B cell (primary cell): ENCODE measurements at regions of chr7 and their contacts with region 1.

Region 1: DNA sequence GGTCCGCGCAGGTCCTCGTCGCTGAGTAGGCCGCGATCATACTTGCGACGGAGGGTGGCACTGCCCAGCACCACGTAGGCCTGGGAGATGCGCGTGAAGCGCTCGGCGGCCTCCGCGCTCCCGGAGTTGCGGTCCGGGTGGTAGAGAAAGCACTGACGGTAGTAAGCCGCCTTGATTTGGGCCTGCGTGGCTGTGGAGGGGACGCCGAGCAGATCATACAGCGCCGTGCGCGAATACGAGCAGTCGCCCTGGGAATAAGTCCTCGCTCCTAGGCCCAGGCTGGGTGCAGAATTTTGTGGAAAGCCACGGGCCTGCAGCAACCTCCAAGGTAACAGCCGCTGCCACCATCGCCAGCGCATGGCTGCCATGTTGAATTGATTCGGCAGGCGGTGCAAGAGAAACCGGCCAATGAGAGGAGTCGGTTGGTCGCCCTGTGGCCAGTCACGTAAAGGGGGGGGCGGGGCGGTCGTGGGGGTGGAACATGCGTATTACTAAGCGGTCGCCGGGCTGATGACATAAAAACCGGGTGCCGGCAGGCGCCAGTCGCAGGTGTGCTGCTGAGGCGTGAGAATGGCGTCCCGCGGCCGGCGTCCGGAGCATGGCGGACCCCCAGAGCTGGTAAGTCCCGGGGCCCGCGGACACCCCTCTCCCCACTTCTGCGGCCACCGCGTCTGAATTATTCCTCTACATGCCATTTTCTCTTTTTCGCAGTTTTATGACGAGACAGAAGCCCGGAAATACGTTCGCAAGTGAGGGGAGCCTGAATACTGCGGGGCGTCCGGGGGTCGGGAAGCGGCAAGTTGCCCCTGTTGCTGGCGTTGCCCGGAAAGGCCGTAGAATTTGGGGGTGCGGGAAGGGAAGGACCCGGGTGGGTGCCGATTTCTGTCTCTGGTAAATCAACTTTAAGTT is at the starts of genes BUD23 and DNAJC30:
- DNase-seq: peak; percentile 96
- ATAC-seq: peak; percentile 97
- H3K4me3 ChIP-seq: peak within 1 kb of the TSS; percentile 79 to 99 (median 95)
- H3K4me3 Mint-ChIP-seq: peak within 1 kb of the TSS; percentile 97
- H3K27ac ChIP-seq: peak within 1 kb of the TSS; percentile 81 to 90
- H3K27ac Mint-ChIP-seq: peak within 1 kb of the TSS; percentile 96
- H3K4me1 ChIP-seq: peaks cover 19 to 25% of the 10 kb centered on the region in 2 donors
- H3K4me1 Mint-ChIP-seq: peaks cover 32% of the 10 kb centered on the region
- H3K27me3 ChIP-seq: no peaks in the 10 kb centered on the region
- H3K27me3 Mint-ChIP-seq: no peaks in the 10 kb centered on the region
- CTCF ChIP-seq: no peak
- total RNA-seq, gene BUD23: 55.9 and 63.9 TPM in 2 replicates
- total RNA-seq, gene DNAJC30: 15.5 and 17.5 TPM in 2 replicates

Region 2: DNA sequence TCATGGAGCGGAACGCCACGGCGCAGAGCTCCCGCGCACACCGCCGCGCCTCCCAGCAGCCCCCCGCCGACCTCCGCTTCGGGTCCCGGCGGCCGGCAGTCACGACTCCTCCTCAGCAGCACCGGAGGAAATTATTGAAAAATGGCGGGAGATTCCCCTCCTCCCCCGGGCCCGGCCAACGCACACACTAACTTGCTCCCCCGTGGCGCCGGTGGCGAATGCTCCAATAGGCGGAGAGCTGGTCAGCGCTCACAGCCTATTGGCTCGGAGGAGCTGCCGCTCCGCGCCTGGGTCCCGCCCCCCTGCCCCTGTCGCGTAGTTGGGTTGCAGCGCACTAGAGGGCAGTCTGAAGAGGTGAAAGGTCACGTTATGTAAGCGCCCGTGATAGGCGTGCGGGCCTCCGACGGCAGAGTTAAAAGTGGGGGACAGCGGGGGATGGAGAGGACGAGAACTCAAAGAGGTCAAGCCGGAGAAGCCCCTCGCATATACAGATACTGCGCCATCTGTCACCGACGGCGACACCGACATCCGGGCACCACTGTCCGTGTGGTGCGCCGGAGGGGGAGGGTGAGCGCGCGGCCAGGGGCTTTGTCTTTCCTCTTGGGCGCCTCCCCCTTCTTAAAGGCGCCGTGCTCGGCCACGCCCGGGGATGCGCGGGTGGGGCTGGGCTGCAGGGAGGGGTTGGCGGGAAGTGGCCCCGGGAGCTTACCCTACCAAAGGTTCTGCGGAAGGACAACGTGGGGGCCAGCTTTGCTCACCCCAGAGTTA is 161.0 kb before region 1 on chr7 and contains the start of gene BAZ1B:
- CTCF ChIA-PET with region 1: no interaction called
- POLR2A ChIA-PET with region 1: no interaction called
- intact Hi-C with region 1: loop called (anchors 2 kb)
- DNase-seq: peak; percentile 98
- ATAC-seq: peak; percentile 91
- H3K4me3 ChIP-seq: peak within 1 kb of the TSS; percentile 50 to 78 (median 68)
- H3K4me3 Mint-ChIP-seq: peak within 1 kb of the TSS; percentile 95
- H3K27ac ChIP-seq: peak within 1 kb of the TSS; percentile 82 to 87
- H3K27ac Mint-ChIP-seq: peak within 1 kb of the TSS; percentile 98
- H3K4me1 ChIP-seq: peaks cover 58 to 63% of the 10 kb centered on the region in 2 donors
- H3K4me1 Mint-ChIP-seq: peaks cover 60% of the 10 kb centered on the region
- H3K27me3 ChIP-seq: no peaks in the 10 kb centered on the region
- H3K27me3 Mint-ChIP-seq: no peaks in the 10 kb centered on the region
- CTCF ChIP-seq: no peak
- total RNA-seq, gene BAZ1B: 67.0 and 68.1 TPM in 2 replicates

Region 3: DNA sequence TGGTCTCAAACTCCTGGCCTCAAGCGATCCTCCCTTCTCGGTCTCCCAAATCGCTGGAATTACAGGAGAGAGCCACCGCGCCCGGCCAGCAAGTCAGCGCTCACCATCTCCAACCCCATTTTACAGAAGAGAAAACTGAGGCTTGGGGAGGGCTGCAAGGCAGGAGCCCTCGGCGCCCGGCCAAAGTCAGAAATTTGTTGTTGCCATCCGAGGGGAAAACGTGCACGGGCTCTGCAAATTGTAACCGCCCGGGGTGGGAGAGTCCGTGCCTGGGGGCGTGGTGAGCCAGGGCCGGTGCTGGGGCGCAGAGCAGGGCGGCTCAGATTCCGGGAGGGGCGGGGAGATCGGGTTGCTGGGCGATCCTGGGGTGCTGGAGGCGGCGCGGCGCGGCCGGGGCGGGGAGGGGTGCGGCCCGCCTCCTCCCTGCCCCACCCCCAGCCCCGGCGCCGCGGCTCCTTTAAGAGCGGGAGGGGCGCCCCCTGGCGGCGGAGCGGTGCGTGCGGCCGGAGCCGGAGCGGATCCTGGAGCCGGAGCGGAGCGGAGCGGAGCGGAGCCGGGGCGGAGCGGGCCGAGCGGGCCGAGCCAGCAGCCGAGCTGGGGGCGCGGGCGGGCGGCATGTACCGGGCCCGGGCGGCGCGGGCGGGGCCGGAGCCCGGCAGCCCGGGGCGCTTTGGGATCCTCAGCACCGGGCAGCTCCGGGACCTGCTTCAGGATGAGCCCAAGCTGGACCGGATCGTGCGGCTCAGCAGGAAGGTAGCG is 15.8 kb before region 1 on chr7 and contains the start of gene VPS37D:
- CTCF ChIA-PET with region 1: no interaction called
- POLR2A ChIA-PET with region 1: interaction called, 4 read pairs
- intact Hi-C with region 1: loop called (anchors 1 kb)
- DNase-seq: peak; percentile 94
- ATAC-seq: peak; percentile 94
- H3K4me3 ChIP-seq: peak within 1 kb of the TSS in 4 of 5 experiments; percentile 39 to 59 (median 48)
- H3K4me3 Mint-ChIP-seq: peak within 1 kb of the TSS; percentile 83
- H3K27ac ChIP-seq: no peak within 1 kb of the TSS
- H3K27ac Mint-ChIP-seq: peak within 1 kb of the TSS; percentile 20
- H3K4me1 ChIP-seq: peaks cover 8 to 16% of the 10 kb centered on the region in 2 donors
- H3K4me1 Mint-ChIP-seq: peaks cover 8% of the 10 kb centered on the region
- H3K27me3 ChIP-seq: peaks cover 0 to 55% (median 21%) of the 10 kb centered on the region in 4 experiments
- H3K27me3 Mint-ChIP-seq: peaks cover 42% of the 10 kb centered on the region
- CTCF ChIP-seq: peak; percentile 73
- total RNA-seq, gene VPS37D: 0.71 and 0.78 TPM in 2 replicates

Region 4: DNA sequence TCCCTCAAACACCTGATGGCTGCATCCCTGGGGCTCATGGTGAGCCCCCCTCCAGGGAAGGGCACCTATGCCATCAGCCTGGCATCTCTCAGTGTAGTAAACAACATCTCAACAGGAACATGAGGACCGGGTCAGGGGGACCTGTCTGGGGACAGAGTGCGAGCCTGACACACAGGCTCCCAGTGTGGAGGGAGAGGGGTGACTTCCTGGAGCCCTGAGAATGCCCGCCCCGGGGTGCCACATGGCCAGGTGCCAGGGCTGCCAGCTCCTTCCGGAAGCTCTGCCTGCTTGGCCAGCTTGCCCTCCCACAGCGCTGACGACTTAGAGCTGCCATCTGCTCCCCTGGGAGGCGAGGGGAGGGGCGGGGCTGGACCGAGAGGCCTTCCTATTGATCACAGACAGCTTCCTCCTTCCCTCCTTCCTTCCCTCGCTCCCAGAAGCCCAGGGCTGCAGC is 23.9 kb after region 1 on chr7:
- CTCF ChIA-PET with region 1: no interaction called
- POLR2A ChIA-PET with region 1: no interaction called
- intact Hi-C with region 1: no loop called
- DNase-seq: peak; percentile 72
- ATAC-seq: peak; percentile 82
- H3K4me3 ChIP-seq: peak overlapping the region in 1 of 5 experiments; percentile 7
- H3K4me3 Mint-ChIP-seq: peak overlapping the region; percentile 53
- H3K27ac ChIP-seq: no peak overlapping the region
- H3K27ac Mint-ChIP-seq: peak overlapping the region; percentile 50
- H3K4me1 ChIP-seq: peaks cover 18 to 22% of the 10 kb centered on the region in 2 donors
- H3K4me1 Mint-ChIP-seq: peaks cover 25% of the 10 kb centered on the region
- H3K27me3 ChIP-seq: peaks cover 0 to 10% (median 0%) of the 10 kb centered on the region in 4 experiments
- H3K27me3 Mint-ChIP-seq: peaks cover 1% of the 10 kb centered on the region
- CTCF ChIP-seq: no peak

Region 5: DNA sequence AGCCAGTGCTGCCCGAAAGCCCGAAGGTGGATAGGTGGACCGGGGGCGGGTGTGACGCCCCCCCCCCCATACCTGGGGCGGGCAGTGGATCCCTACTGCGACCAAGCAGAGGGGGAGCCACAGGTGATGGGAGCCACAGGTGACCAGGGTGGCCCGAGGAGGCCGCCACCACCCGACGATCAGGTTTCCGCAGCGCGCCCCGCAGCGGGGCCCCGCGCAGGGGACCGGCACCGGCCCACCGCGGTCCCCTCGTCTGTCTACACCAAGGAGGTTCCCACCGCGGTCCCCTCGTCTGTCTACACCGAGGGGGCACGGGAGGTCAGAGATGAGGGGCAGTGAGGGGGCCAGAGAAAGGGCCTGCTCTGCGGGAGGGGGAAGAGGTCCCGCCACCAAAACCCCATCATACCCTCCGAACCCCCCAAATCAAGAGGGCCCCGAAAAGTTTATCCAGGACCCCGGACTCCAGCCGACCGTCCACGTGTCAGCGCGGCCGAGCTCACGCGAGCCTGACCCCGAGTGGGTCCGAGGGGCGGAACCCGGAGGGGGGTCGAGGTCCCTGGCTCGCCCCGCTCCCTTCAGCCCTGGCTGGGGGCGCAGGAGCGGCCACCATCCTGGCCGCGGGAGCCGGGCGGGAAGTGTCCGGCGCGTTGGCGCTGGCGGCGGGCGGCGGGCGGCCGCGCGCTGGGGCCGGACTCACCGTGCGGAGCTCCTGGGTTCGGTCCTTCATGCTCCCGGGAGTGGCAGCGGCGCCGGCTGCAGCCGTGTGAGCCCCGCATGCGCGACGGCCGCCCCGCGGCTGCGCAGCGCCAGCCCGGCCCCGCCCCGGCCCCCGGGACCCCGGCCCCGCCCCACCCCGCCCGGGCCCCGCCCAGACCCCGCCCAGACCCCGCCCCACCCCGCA is 35.8 kb after region 1 on chr7 and contains the start of gene STX1A:
- CTCF ChIA-PET with region 1: no interaction called
- POLR2A ChIA-PET with region 1: interaction called, 5 read pairs
- intact Hi-C with region 1: loop called (anchors 5 kb)
- DNase-seq: peak; percentile 82
- ATAC-seq: peak; percentile 89
- H3K4me3 ChIP-seq: peak within 1 kb of the TSS; percentile 15 to 70 (median 59)
- H3K4me3 Mint-ChIP-seq: peak within 1 kb of the TSS; percentile 83
- H3K27ac ChIP-seq: no peak within 1 kb of the TSS
- H3K27ac Mint-ChIP-seq: peak within 1 kb of the TSS; percentile 37
- H3K4me1 ChIP-seq: peaks cover 25 to 31% of the 10 kb centered on the region in 2 donors
- H3K4me1 Mint-ChIP-seq: peaks cover 20% of the 10 kb centered on the region
- H3K27me3 ChIP-seq: peaks cover 0 to 57% (median 25%) of the 10 kb centered on the region in 4 experiments
- H3K27me3 Mint-ChIP-seq: peaks cover 27% of the 10 kb centered on the region
- CTCF ChIP-seq: no peak
- total RNA-seq, gene STX1A: 3.0 and 3.1 TPM in 2 replicates

Region 6: DNA sequence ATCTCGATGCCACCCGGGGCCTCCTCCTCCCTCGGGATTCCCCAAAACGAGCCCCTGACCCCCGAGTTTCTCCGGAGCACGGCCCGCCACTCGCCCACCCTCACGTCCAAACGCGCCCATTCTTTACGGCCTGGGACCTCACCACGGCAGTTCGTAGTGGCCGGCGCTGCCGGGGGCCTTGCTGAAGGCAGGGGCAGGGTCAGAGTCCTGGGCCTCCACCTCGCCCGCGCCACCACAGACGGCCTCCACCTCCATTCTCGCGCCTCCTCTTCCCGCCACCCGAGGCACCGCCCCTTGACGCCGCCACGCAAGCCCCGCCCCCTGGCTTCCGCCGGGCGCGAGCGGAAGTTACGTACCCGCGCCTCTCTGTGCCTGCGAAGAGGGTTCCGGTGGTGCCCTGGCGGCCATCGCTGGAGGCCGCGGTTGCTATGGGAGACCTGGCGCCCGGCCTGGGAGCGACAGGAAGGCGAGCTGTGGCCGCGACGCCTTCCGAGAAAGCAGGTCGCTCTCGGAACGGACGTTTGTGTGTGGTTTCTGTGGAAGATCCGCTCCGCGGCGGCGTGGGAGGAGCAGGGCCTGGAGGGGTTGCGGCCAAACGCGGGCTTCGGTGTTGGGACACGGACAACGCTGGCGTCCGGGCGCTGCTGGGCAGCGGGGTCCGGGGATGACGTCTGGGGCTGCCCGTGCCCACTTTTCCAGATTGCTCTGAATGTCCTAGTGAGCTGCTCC is 571.0 kb after region 1 on chr7 and contains the start of gene RFC2:
- CTCF ChIA-PET with region 1: no interaction called
- POLR2A ChIA-PET with region 1: no interaction called
- intact Hi-C with region 1: loop called (anchors 10 kb)
- DNase-seq: peak; percentile 97
- ATAC-seq: peak; percentile 97
- H3K4me3 ChIP-seq: peak within 1 kb of the TSS; percentile 72 to 99 (median 91)
- H3K4me3 Mint-ChIP-seq: peak within 1 kb of the TSS; percentile 97
- H3K27ac ChIP-seq: peak within 1 kb of the TSS; percentile 66 to 90
- H3K27ac Mint-ChIP-seq: peak within 1 kb of the TSS; percentile 95
- H3K4me1 ChIP-seq: peaks cover 16 to 44% of the 10 kb centered on the region in 2 donors
- H3K4me1 Mint-ChIP-seq: peaks cover 30% of the 10 kb centered on the region
- H3K27me3 ChIP-seq: no peaks in the 10 kb centered on the region
- H3K27me3 Mint-ChIP-seq: no peaks in the 10 kb centered on the region
- CTCF ChIP-seq: peak; percentile 29
- total RNA-seq, gene RFC2: 33.2 and 36.4 TPM in 2 replicates

Region 7: DNA sequence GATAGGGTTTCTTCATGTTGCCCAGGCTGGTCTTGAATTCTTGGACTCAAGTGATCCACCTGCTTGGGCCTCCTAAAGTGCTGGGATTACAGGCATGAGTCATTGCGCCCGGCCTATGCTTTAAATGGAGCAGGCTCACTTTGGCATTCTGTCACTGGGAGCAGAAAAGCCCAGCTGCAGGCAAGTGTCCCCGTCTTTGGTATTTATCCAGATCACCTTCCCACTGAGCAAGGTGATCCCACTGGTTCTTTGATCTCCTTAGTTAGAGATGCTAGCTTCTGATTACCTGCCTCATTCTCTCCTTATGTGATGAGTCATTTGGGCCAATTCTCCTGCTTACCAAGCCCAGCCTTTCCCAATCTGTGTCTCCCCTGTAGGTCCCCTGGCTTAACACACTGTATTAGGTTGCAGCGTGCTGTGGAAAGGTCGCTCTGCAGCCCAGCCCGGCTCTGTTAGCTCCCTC is 1848.1 kb after region 1 on chr7:
- CTCF ChIA-PET with region 1: no interaction called
- POLR2A ChIA-PET with region 1: no interaction called
- intact Hi-C with region 1: loop called (anchors 10 kb)
- DNase-seq: no peak
- ATAC-seq: no peak
- H3K4me3 ChIP-seq: no peak overlapping the region
- H3K4me3 Mint-ChIP-seq: no peak overlapping the region
- H3K27ac ChIP-seq: no peak overlapping the region
- H3K27ac Mint-ChIP-seq: no peak overlapping the region
- H3K4me1 ChIP-seq: peaks cover 12 to 14% of the 10 kb centered on the region in 2 donors
- H3K4me1 Mint-ChIP-seq: peaks cover 23% of the 10 kb centered on the region
- H3K27me3 ChIP-seq: no peaks in the 10 kb centered on the region
- H3K27me3 Mint-ChIP-seq: no peaks in the 10 kb centered on the region
- CTCF ChIP-seq: no peak